ENCODE measurements at regions of chr7 and their contacts with region 1.

Region 1: GRCh38 chr7:112789817-112790585 is at the start of gene TMEM168:
- DNase-seq: peak; percentile 30
- ATAC-seq: peak; percentile 92
- H3K4me3 ChIP-seq: peak within 1 kb of the TSS; percentile 85
- H3K27ac ChIP-seq: peak within 1 kb of the TSS; percentile 94
- H3K4me1 ChIP-seq: peaks cover 7% of the 10 kb centered on the region; the same call in 1 of the 2 replicates
- H3K27me3 ChIP-seq: no peaks in the 10 kb centered on the region
- CTCF ChIP-seq: 0 out of 6 replicates have a peak, but pooled peaks of 1 of the 3 experiments have one; percentile 4
- EP300 ChIP-seq: no peak
- POLR2A ChIP-seq: peak; percentile 97
- RAD21 ChIP-seq: no peak
- polyA plus RNA-seq, gene TMEM168: 9.1 to 14.4 TPM

Region 2: DNA sequence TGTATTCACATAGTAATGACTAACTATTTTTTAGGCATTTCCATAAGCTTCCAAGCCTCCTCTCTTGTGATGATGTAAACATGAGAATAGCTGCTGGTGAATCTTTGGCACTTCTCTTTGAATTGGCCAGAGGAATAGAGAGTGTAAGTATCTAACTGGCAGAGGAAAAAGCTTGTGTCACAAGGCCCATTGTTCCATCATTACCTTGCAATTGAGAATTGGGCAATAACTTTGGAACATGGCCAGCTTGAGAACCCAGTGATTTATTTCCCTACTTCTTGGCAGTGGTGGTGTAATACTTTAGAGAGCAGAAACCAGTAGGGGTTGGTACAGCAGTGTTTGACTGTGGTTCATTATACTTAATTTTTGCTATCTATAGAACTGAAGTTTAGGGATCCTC is 327.8 kb before region 1 on chr7:
- CTCF ChIA-PET with region 1: no interaction called
- POLR2A ChIA-PET with region 1: no interaction called
- RAD21 ChIA-PET with region 1: no interaction called
- SMC1A ChIA-PET with region 1: no interaction called
- in situ Hi-C with region 1: loop called (anchors 10 kb)
- intact Hi-C with region 1: no loop called
- DNase-seq: no peak
- ATAC-seq: no peak
- H3K4me3 ChIP-seq: no peak overlapping the region
- H3K27ac ChIP-seq: no peak overlapping the region
- H3K4me1 ChIP-seq: no peaks in the 10 kb centered on the region
- H3K27me3 ChIP-seq: no peaks in the 10 kb centered on the region
- CTCF ChIP-seq: no peak
- EP300 ChIP-seq: no peak
- POLR2A ChIP-seq: no peak
- RAD21 ChIP-seq: no peak

Region 3: GRCh38 chr7:112779667-112780066 is 10.3 kb before region 1 on chr7:
- CTCF ChIA-PET with region 1: no interaction called
- POLR2A ChIA-PET with region 1: interaction called, 4 read pairs
- RAD21 ChIA-PET with region 1: no interaction called
- SMC1A ChIA-PET with region 1: interaction called, 14 read pairs
- in situ Hi-C with region 1: no loop called
- intact Hi-C with region 1: no loop called
- DNase-seq: no peak
- ATAC-seq: no peak
- H3K4me3 ChIP-seq: no peak overlapping the region
- H3K27ac ChIP-seq: no peak overlapping the region
- H3K4me1 ChIP-seq: 0 out of 2 replicates have a peak, but pooled peaks cover 3% of the 10 kb centered on the region
- H3K27me3 ChIP-seq: no peaks in the 10 kb centered on the region
- CTCF ChIP-seq: no peak
- EP300 ChIP-seq: no peak
- POLR2A ChIP-seq: no peak
- RAD21 ChIP-seq: no peak

Region 4: GRCh38 chr7:112806156-112806555 is 16.2 kb after region 1 on chr7:
- CTCF ChIA-PET with region 1: no interaction called
- POLR2A ChIA-PET with region 1: no interaction called
- RAD21 ChIA-PET with region 1: no interaction called
- SMC1A ChIA-PET with region 1: interaction called, 3 read pairs
- in situ Hi-C with region 1: no loop called
- intact Hi-C with region 1: loop called (anchors 1 kb)
- DNase-seq: no peak
- ATAC-seq: no peak
- H3K4me3 ChIP-seq: no peak overlapping the region
- H3K27ac ChIP-seq: no peak overlapping the region
- H3K4me1 ChIP-seq: no peaks in the 10 kb centered on the region
- H3K27me3 ChIP-seq: no peaks in the 10 kb centered on the region
- CTCF ChIP-seq: no peak
- EP300 ChIP-seq: no peak
- POLR2A ChIP-seq: no peak
- RAD21 ChIP-seq: no peak

Measured in GM12878 (cell line).